ENCODE measurements at regions of chr12 and their contacts with region 1.

Region 1: DNA sequence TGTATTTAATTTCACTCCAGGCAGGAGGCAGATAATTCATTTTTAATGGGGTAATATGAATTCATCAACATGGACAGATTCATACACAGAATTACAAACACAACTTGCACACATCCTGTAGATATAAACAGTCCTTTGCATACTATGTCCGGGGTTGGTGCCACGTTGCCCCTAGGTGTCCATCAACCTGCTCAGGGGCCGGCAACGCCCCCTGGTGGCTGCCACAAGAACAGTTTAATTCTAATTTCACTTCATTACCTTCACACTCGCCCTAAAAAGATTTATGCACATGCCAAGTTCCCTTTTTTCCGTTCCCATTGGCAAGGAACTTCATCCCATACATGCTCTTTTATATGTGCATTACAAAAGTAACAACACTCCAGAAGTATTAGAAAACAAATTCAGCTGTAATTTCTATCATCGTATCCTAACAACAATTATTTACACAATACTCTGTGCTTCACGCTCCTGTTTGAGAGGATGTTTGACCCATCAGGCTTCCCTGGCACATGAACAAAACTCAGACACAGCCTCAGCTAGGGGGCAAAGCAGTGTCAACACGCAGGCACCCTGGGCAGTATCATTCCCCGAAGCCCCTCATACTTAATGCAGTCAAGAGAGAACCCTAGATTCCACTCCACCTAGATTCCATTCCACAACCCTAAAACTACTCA is 15.5 kb downstream of the MANSC1 start:
- DNase-seq: peak; percentile 13 to 80 (median 61)
- ATAC-seq: peak; percentile 66
- H3K4me3 ChIP-seq: no peak overlapping the region
- H3K4me3 Mint-ChIP-seq: no peak overlapping the region
- H3K27ac ChIP-seq: no peak overlapping the region
- H3K27ac Mint-ChIP-seq: no peak overlapping the region
- H3K4me1 ChIP-seq: peaks cover 7% of the 10 kb centered on the region
- H3K4me1 Mint-ChIP-seq: peaks cover 22% of the 10 kb centered on the region
- H3K27me3 ChIP-seq: no peaks in the 10 kb centered on the region
- H3K27me3 Mint-ChIP-seq: peaks cover 4% of the 10 kb centered on the region
- CTCF ChIP-seq: peak; percentile 91

Region 2: DNA sequence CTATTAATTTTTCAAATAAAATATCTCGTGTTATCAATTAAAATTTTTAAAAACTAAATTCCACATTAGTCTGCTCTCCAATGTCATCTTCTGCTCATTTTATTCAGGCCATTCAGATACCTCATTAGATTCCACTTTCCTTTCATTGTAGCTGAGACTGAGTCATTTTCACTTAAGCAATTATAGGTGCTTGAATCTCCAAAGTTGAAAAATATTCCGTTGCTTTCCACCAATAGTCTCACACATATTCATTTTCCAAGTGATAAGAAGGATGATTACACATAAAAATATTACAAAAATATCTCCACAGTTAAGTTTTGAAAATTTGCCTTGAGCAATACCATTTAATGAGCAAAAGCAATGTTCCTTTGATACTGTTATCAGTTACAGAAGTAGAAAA is 1574.8 kb before region 1 on chr12:
- CTCF ChIA-PET with region 1: no interaction called
- POLR2A ChIA-PET with region 1: no interaction called
- intact Hi-C with region 1: loop called in 1 of 2 experiments (anchors 10 kb)
- DNase-seq: no peak
- ATAC-seq: no peak
- H3K4me3 ChIP-seq: no peak overlapping the region
- H3K4me3 Mint-ChIP-seq: no peak overlapping the region
- H3K27ac ChIP-seq: no peak overlapping the region
- H3K27ac Mint-ChIP-seq: no peak overlapping the region
- H3K4me1 ChIP-seq: no peaks in the 10 kb centered on the region
- H3K4me1 Mint-ChIP-seq: no peaks in the 10 kb centered on the region
- H3K27me3 ChIP-seq: peaks cover 0 to 5% of the 10 kb centered on the region in 2 experiments
- H3K27me3 Mint-ChIP-seq: peaks cover 32% of the 10 kb centered on the region
- CTCF ChIP-seq: no peak

Region 3: GRCh38 chr12:12349711-12350665 is 15.5 kb after region 1 on chr12 and contains the start of gene MANSC1:
- CTCF ChIA-PET with region 1: interaction called, 25 read pairs
- POLR2A ChIA-PET with region 1: no interaction called
- intact Hi-C with region 1: no loop called
- DNase-seq: peak in 8 of 9 experiments; percentile 22 to 78 (median 52)
- ATAC-seq: peak; percentile 75
- H3K4me3 ChIP-seq: peak within 1 kb of the TSS; percentile 45 to 61
- H3K4me3 Mint-ChIP-seq: peak within 1 kb of the TSS; percentile 78
- H3K27ac ChIP-seq: peak within 1 kb of the TSS; percentile 24 to 45
- H3K27ac Mint-ChIP-seq: peak within 1 kb of the TSS; percentile 52
- H3K4me1 ChIP-seq: peaks cover 19% of the 10 kb centered on the region
- H3K4me1 Mint-ChIP-seq: peaks cover 22% of the 10 kb centered on the region
- H3K27me3 ChIP-seq: no peaks in the 10 kb centered on the region
- H3K27me3 Mint-ChIP-seq: no peaks in the 10 kb centered on the region
- CTCF ChIP-seq: peak; percentile 24
- total RNA-seq, gene MANSC1: not detected

Measured in CD8-positive, alpha-beta T cell (primary cell).